Activated B cell treated with CpG ODN at 0.5 μM for 24 hours (primary cell): ENCODE measurements at regions of chr1 and their contacts with region 1.

Region 1: DNA sequence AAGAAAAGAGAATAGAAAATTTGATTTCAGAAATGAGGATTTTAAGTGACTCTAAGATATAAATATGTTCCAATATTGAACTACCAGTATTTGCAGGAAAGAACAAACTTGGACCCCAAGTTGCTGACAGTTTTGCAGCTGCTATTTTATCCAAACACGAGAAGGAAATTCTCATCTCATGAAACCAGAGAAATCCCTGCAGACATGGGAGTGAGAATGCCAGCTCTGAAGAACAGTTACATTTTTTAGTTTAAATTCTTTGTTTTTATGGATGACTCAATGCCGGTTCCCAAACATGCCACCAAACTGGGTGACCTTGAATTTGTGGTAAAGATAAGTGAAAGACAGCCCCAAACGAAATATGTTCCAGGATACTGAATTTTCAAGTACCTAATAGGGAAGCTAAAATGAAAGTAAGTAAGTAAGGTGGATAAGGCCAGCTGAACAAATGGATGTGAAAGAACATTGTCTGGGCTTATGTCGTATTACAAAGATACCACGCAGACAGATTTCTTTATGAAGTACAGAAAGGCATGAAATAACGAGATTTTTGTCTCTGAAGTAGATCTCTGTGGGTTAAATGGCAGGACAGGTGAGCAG is 19.9 kb downstream of the TLR5 start:
- DNase-seq: no peak
- ATAC-seq: no peak
- H3K4me3 Mint-ChIP-seq: peak overlapping the region; percentile 36
- H3K27ac Mint-ChIP-seq: no peak overlapping the region
- H3K4me1 Mint-ChIP-seq: peaks cover 8% of the 10 kb centered on the region
- H3K27me3 Mint-ChIP-seq: peaks cover 7% of the 10 kb centered on the region
- CTCF ChIP-seq: no peak

Region 2: GRCh38 chr1:223031733-223032601 is 91.1 kb before region 1 on chr1:
- CTCF ChIA-PET with region 1: no interaction called
- POLR2A ChIA-PET with region 1: no interaction called
- intact Hi-C with region 1: no loop called
- DNase-seq: no peak
- ATAC-seq: no peak
- H3K4me3 Mint-ChIP-seq: no peak overlapping the region
- H3K27ac Mint-ChIP-seq: no peak overlapping the region
- H3K4me1 Mint-ChIP-seq: no peaks in the 10 kb centered on the region
- H3K27me3 Mint-ChIP-seq: peaks cover 3% of the 10 kb centered on the region
- CTCF ChIP-seq: no peak

Region 3: DNA sequence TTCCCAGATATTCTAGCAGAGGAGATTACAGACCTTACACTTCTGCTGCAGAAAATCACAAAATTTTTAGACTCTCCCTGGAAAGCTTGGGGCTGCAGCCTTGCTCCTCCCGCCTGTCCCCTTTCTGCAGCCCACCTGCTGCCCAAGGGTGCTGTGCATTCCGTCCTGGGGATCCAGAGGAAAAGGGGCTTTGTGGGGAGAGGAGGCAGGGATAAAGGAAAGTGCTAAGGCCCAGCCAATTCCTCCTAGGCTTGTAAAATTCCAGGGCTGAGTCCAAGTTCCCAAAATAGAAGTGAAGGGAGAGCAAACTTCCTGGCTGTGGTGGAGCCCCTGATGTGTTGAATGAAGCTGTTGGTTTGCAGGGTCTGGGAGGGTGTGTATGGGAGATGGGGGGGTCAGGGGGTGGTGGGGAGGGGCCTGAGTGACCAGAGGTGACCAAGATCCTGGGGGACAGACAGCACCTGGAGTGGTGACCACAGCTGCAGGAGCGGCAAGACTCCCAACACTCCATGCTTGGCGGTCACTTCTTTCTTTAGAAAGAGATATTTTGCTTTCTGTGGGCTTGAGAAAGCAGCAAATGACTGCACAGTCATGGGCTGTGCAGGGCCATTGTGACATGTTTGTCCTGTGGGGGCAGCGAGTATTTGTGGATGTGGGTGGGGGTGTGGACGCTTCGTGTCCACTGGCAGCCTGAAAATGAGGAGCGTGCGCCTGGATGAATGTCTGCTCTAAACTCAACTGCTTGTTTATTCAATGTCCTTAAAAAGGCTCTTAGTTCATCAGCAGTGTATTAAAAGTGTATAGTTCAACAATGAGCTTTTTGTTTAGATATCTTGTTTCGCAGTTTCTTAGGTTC is 48.4 kb before region 1 on chr1:
- CTCF ChIA-PET with region 1: no interaction called
- POLR2A ChIA-PET with region 1: no interaction called
- intact Hi-C with region 1: no loop called
- DNase-seq: no peak
- ATAC-seq: no peak
- H3K4me3 Mint-ChIP-seq: no peak overlapping the region
- H3K27ac Mint-ChIP-seq: no peak overlapping the region
- H3K4me1 Mint-ChIP-seq: no peaks in the 10 kb centered on the region
- H3K27me3 Mint-ChIP-seq: peaks cover 24% of the 10 kb centered on the region
- CTCF ChIP-seq: no peak

Region 4: DNA sequence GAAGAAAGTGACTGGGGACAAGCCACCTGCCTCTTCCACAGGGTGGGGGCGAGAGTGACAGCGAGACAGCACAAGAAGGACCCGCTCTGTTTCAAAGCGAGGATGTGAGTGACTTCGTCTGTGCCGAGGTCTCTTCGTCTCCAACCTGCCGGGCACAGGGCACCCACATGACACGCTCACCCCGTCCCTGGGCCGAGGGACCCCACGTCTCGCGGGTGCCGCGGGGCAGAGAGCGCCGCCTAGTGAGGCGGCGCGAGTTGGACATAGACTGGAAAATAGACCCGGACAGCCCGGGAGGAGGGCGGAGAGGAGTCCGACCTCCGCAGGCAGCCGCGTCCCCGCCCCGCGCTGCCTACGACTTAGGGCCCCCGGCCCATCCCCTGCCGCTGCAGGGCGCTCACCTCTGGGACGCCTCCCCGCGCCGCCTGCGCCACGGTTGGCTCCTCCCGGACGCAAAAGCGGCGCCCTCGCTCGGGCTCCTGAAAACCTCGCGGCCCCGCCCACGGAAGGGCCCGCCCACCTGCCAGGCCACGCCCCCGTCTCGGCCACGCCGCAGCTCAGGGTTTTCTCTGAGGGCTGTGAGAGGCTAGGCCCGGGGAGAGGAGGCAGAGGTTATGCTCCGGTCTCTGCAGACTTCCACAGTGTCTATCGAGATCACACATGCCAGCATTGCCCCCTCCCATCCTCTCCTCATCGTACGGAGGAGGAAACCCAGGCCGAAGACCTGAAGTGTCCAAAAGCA is 19.9 kb after region 1 on chr1 and contains the start of gene TLR5:
- CTCF ChIA-PET with region 1: interaction called, 13 read pairs
- POLR2A ChIA-PET with region 1: no interaction called
- intact Hi-C with region 1: loop called (anchors 2 kb)
- DNase-seq: peak; percentile 82
- ATAC-seq: peak; percentile 93
- H3K4me3 Mint-ChIP-seq: peak within 1 kb of the TSS; percentile 72
- H3K27ac Mint-ChIP-seq: no peak within 1 kb of the TSS
- H3K4me1 Mint-ChIP-seq: peaks cover 9% of the 10 kb centered on the region
- H3K27me3 Mint-ChIP-seq: peaks cover 22% of the 10 kb centered on the region
- CTCF ChIP-seq: no peak
- total RNA-seq, gene TLR5: not detected in 2 replicates